Body of pancreas (tissue), 4 donors: ENCODE measurements at regions of chr1 and their contacts with region 1.

Region 1: GRCh38 chr1:23290836-23291565 is 53.1 kb downstream of the HNRNPR start:
- DNase-seq: no peak
- ATAC-seq: no peak
- H3K4me3 ChIP-seq: no peak overlapping the region
- H3K27ac ChIP-seq: no peak overlapping the region
- H3K4me1 ChIP-seq: peaks cover 14% of the 10 kb centered on the region
- H3K27me3 ChIP-seq: no peaks in the 10 kb centered on the region
- CTCF ChIP-seq: no peak
- POLR2A ChIP-seq: no peak

Region 2: GRCh38 chr1:23344111-23344986 is 53.3 kb after region 1 on chr1 and contains the start of gene HNRNPR:
- intact Hi-C with region 1: loop called (anchors 10 kb)
- DNase-seq: peak; percentile 100
- ATAC-seq: peak; percentile 97
- H3K4me3 ChIP-seq: peak within 1 kb of the TSS; percentile 88 to 92
- H3K27ac ChIP-seq: peak within 1 kb of the TSS; percentile 91 to 99 (median 96)
- H3K4me1 ChIP-seq: peaks cover 45% of the 10 kb centered on the region
- H3K27me3 ChIP-seq: no peaks in the 10 kb centered on the region
- CTCF ChIP-seq: peak in 4 of 7 experiments; percentile 32 to 43 (median 34)
- POLR2A ChIP-seq: peak; percentile 70 to 88 (median 86)
- total RNA-seq, gene HNRNPR: 34.2 to 41.2 TPM

Region 3: DNA sequence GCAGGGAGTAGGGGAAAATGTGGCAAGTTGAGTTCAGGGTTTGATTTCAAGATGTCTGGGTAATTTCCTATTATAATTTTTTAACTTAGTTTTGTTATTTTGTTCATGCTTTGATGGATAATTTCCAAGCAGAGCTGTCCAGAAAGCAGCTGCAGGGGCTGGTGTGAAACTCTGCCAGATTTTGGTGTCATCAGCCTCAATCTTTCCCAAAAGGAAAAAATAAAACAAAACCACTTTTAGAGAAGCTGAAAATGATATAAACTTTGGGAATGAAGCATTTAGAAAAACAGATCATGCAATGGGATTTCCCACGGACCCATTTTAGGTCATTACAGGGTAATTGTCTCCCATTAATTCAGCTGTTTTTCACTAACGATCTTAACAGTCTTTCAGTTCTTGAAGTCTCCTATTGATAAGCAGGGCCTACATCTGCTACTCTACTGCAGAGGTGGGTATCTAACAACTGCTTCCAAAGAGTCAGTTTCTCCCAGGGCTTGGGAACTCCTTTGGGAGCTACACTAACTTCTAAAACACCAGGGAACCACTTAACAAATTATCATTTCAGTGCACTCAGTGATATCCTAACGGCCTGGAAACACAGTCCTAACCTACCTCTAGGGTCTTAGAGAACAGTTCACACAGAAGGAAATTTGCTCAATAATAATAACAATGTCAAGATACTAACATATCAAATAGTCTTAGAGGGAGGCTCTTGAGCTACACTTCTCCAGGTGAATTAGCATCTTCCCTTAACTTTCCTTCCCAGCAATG is 66.3 kb after region 1 on chr1:
- intact Hi-C with region 1: no loop called
- DNase-seq: no peak
- ATAC-seq: no peak
- H3K4me3 ChIP-seq: no peak overlapping the region
- H3K27ac ChIP-seq: no peak overlapping the region
- H3K4me1 ChIP-seq: no peaks in the 10 kb centered on the region
- H3K27me3 ChIP-seq: no peaks in the 10 kb centered on the region
- CTCF ChIP-seq: no peak
- POLR2A ChIP-seq: no peak